ENCODE measurements at regions of chrX and their contacts with region 1.

Region 1: GRCh38 chrX:76172325-76172893 is 453 bp upstream of the PBDC1 start:
- DNase-seq: no peak
- ATAC-seq: peak; percentile 49
- H3K4me3 ChIP-seq: peak overlapping the region; percentile 71
- H3K4me3 Mint-ChIP-seq: peak overlapping the region; percentile 97
- H3K27ac ChIP-seq: peak overlapping the region; percentile 72 to 82
- H3K27ac Mint-ChIP-seq: peak overlapping the region; percentile 98
- H3K4me1 ChIP-seq: peaks cover 19% of the 10 kb centered on the region
- H3K4me1 Mint-ChIP-seq: peaks cover 53% of the 10 kb centered on the region
- H3K27me3 ChIP-seq: no peaks in the 10 kb centered on the region
- H3K27me3 Mint-ChIP-seq: no peaks in the 10 kb centered on the region
- CTCF ChIP-seq: no peak

Region 2: GRCh38 chrX:74614093-74614909 is 1558.1 kb before region 1 on chrX and contains the start of gene RLIM:
- CTCF ChIA-PET with region 1: no interaction called
- POLR2A ChIA-PET with region 1: interaction called, 5 read pairs
- intact Hi-C with region 1: loop called in 1 of 2 experiments (anchors 10 kb)
- DNase-seq: peak; percentile 83 to 97 (median 88)
- ATAC-seq: peak; percentile 88
- H3K4me3 ChIP-seq: peak within 1 kb of the TSS; percentile 90
- H3K4me3 Mint-ChIP-seq: peak within 1 kb of the TSS; percentile 99
- H3K27ac ChIP-seq: peak within 1 kb of the TSS; percentile 95 to 100
- H3K27ac Mint-ChIP-seq: peak within 1 kb of the TSS; percentile 95
- H3K4me1 ChIP-seq: peaks cover 6% of the 10 kb centered on the region
- H3K4me1 Mint-ChIP-seq: peaks cover 25% of the 10 kb centered on the region
- H3K27me3 ChIP-seq: no peaks in the 10 kb centered on the region
- H3K27me3 Mint-ChIP-seq: no peaks in the 10 kb centered on the region
- CTCF ChIP-seq: no peak
- total RNA-seq, gene RLIM: 71.0 to 73.6 TPM

Region 3: GRCh38 chrX:75655627-75656026 is 516.8 kb before region 1 on chrX:
- CTCF ChIA-PET with region 1: no interaction called
- POLR2A ChIA-PET with region 1: no interaction called
- intact Hi-C with region 1: no loop called
- DNase-seq: no peak
- ATAC-seq: no peak
- H3K4me3 ChIP-seq: no peak overlapping the region
- H3K4me3 Mint-ChIP-seq: no peak overlapping the region
- H3K27ac ChIP-seq: no peak overlapping the region
- H3K27ac Mint-ChIP-seq: no peak overlapping the region
- H3K4me1 ChIP-seq: no peaks in the 10 kb centered on the region
- H3K4me1 Mint-ChIP-seq: no peaks in the 10 kb centered on the region
- H3K27me3 ChIP-seq: no peaks in the 10 kb centered on the region
- H3K27me3 Mint-ChIP-seq: no peaks in the 10 kb centered on the region
- CTCF ChIP-seq: no peak

Region 4: GRCh38 chrX:76148753-76149152 is 23.7 kb before region 1 on chrX:
- CTCF ChIA-PET with region 1: no interaction called
- POLR2A ChIA-PET with region 1: interaction called, 13 read pairs
- intact Hi-C with region 1: no loop called
- DNase-seq: peak; percentile 13 to 76 (median 42)
- ATAC-seq: peak; percentile 37
- H3K4me3 ChIP-seq: peak overlapping the region; percentile 35
- H3K4me3 Mint-ChIP-seq: peak overlapping the region; percentile 91
- H3K27ac ChIP-seq: peak overlapping the region; percentile 61 to 83
- H3K27ac Mint-ChIP-seq: peak overlapping the region; percentile 98
- H3K4me1 ChIP-seq: peaks cover 12% of the 10 kb centered on the region
- H3K4me1 Mint-ChIP-seq: peaks cover 21% of the 10 kb centered on the region
- H3K27me3 ChIP-seq: no peaks in the 10 kb centered on the region
- H3K27me3 Mint-ChIP-seq: no peaks in the 10 kb centered on the region
- CTCF ChIP-seq: no peak

Region 5: DNA sequence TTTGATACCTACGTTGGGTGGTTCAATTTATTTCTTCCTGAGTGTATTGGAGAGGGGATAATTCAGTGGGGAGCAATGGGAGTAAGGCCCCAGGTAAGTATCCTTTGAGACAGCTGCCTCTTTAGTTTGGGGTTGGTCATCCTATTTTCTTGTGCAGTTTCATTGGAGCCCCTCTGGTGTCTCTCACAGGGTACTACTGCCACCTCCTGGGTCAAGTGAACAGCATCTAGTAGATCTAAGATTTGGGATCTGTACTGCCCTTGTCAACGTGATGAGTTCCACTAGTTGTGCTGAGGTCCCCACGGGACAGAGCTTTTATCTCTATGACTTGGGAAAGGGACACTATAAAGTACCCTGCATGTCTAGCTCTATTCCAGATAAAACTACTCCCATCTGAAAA is 81.0 kb after region 1 on chrX:
- CTCF ChIA-PET with region 1: no interaction called
- POLR2A ChIA-PET with region 1: interaction called, 9 read pairs
- intact Hi-C with region 1: loop called in 1 of 2 experiments (anchors 5 kb)
- DNase-seq: peak; percentile 1 to 67 (median 32)
- ATAC-seq: peak; percentile 57
- H3K4me3 ChIP-seq: no peak overlapping the region
- H3K4me3 Mint-ChIP-seq: no peak overlapping the region
- H3K27ac ChIP-seq: no peak overlapping the region
- H3K27ac Mint-ChIP-seq: no peak overlapping the region
- H3K4me1 ChIP-seq: no peaks in the 10 kb centered on the region
- H3K4me1 Mint-ChIP-seq: no peaks in the 10 kb centered on the region
- H3K27me3 ChIP-seq: no peaks in the 10 kb centered on the region
- H3K27me3 Mint-ChIP-seq: no peaks in the 10 kb centered on the region
- CTCF ChIP-seq: peak; percentile 51

Region 6: GRCh38 chrX:76427560-76428242 is 255.3 kb after region 1 on chrX and contains the start of gene MAGEE1:
- CTCF ChIA-PET with region 1: no interaction called
- POLR2A ChIA-PET with region 1: interaction called, 6 read pairs
- intact Hi-C with region 1: loop called in 1 of 2 experiments (anchors 10 kb)
- DNase-seq: peak; percentile 70 to 90 (median 79)
- ATAC-seq: peak; percentile 79
- H3K4me3 ChIP-seq: peak within 1 kb of the TSS; percentile 90
- H3K4me3 Mint-ChIP-seq: peak within 1 kb of the TSS; percentile 97
- H3K27ac ChIP-seq: peak within 1 kb of the TSS; percentile 53 to 60
- H3K27ac Mint-ChIP-seq: peak within 1 kb of the TSS; percentile 94
- H3K4me1 ChIP-seq: peaks cover 30% of the 10 kb centered on the region
- H3K4me1 Mint-ChIP-seq: peaks cover 42% of the 10 kb centered on the region
- H3K27me3 ChIP-seq: no peaks in the 10 kb centered on the region
- H3K27me3 Mint-ChIP-seq: no peaks in the 10 kb centered on the region
- CTCF ChIP-seq: no peak
- total RNA-seq, gene MAGEE1: 12.4 to 12.7 TPM